ENCODE measurements at regions of chr9 and their contacts with region 1.

Region 1: GRCh38 chr9:72753266-72753893 is 199.5 kb downstream of the ALDH1A1 start:
- DNase-seq: peak; percentile 7
- ATAC-seq: no peak
- H3K4me3 ChIP-seq: no peak overlapping the region
- H3K27ac ChIP-seq: no peak overlapping the region; the same call in 1 of the 2 replicates
- H3K4me1 ChIP-seq: no peaks in the 10 kb centered on the region
- H3K27me3 ChIP-seq: no peaks in the 10 kb centered on the region
- CTCF ChIP-seq: peak; percentile 45; the same call in 1 of the 2 replicates

Region 2: GRCh38 chr9:72648324-72649126 is 104.9 kb before region 1 on chr9:
- CTCF ChIA-PET with region 1: no interaction called
- POLR2A ChIA-PET with region 1: interaction called, 10 read pairs
- in situ Hi-C with region 1: no loop called
- intact Hi-C with region 1: no loop called
- DNase-seq: no peak
- ATAC-seq: no peak
- H3K4me3 ChIP-seq: no peak overlapping the region
- H3K27ac ChIP-seq: no peak overlapping the region
- H3K4me1 ChIP-seq: no peaks in the 10 kb centered on the region
- H3K27me3 ChIP-seq: no peaks in the 10 kb centered on the region
- CTCF ChIP-seq: no peak

Region 3: DNA sequence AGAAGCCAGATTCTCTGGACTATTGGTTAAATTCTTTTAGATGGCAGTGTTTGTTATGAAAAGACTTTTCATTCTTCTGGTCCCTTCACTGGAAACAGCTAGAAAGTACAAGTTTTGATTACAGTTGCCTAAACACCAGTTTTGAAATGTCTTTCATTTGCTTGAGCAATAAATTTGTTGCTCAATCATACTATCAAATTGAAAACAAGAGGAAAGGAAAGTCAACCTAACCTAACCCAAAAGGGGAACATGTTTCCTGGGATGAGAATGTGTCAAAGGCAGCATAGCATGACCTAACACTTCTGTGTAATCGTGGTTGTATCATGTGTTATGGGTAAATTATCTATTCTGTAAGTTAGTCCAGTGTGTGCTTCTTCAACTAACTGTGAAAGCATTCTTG is 18.7 kb before region 1 on chr9:
- CTCF ChIA-PET with region 1: no interaction called
- POLR2A ChIA-PET with region 1: no interaction called
- in situ Hi-C with region 1: no loop called
- intact Hi-C with region 1: no loop called
- DNase-seq: no peak
- ATAC-seq: no peak
- H3K4me3 ChIP-seq: no peak overlapping the region
- H3K27ac ChIP-seq: no peak overlapping the region
- H3K4me1 ChIP-seq: no peaks in the 10 kb centered on the region
- H3K27me3 ChIP-seq: no peaks in the 10 kb centered on the region
- CTCF ChIP-seq: no peak

Region 4: DNA sequence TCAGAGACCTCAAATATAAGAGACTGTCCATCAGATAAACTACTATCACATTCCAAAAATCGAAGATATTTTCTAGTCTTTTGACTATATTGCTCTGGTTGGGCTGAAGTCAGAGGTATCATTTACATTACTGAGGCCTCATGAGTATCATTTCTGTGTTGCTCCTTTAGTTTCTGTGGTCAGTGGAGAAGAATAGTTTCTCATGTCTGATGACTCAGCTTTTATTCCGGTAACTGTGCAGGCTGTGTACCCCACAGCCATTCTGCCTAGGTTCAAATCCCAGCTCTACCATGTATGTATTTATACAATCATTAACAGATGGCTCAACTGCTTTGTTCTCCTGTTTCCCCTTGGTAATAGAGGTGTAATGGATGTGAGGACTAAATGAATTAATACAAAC is 20.2 kb after region 1 on chr9:
- CTCF ChIA-PET with region 1: no interaction called
- POLR2A ChIA-PET with region 1: no interaction called
- in situ Hi-C with region 1: no loop called
- intact Hi-C with region 1: no loop called
- DNase-seq: no peak
- ATAC-seq: no peak
- H3K4me3 ChIP-seq: no peak overlapping the region
- H3K27ac ChIP-seq: no peak overlapping the region
- H3K4me1 ChIP-seq: no peaks in the 10 kb centered on the region
- H3K27me3 ChIP-seq: no peaks in the 10 kb centered on the region
- CTCF ChIP-seq: no peak

Region 5: DNA sequence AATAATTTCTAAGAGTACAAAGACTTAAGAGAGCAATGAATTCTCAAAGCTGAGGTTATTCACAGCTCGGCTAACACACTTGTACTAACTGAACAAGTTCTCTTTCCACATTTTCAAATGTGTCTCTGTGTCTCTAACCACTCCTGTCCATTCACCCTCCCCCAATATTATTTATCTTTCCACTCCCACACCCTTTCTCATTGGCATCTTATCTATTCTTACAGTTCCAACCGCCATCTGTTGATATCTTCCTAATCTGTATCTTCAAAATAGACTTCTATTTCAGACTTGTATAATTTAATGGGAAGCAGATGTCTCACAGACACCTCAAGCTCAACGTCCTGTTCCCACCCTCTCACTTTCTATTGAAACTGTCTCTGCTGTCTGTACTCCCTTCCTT is 604.2 kb after region 1 on chr9:
- CTCF ChIA-PET with region 1: no interaction called
- POLR2A ChIA-PET with region 1: no interaction called
- in situ Hi-C with region 1: no loop called
- intact Hi-C with region 1: no loop called
- DNase-seq: no peak
- ATAC-seq: no peak
- H3K4me3 ChIP-seq: no peak overlapping the region
- H3K27ac ChIP-seq: no peak overlapping the region
- H3K4me1 ChIP-seq: no peaks in the 10 kb centered on the region
- H3K27me3 ChIP-seq: no peaks in the 10 kb centered on the region
- CTCF ChIP-seq: no peak

Measured in Panc1 (cell line).